Naive thymus-derived CD4-positive, alpha-beta T cell (primary cell): ENCODE measurements at regions of chr2 and their contacts with region 1.

Region 1: DNA sequence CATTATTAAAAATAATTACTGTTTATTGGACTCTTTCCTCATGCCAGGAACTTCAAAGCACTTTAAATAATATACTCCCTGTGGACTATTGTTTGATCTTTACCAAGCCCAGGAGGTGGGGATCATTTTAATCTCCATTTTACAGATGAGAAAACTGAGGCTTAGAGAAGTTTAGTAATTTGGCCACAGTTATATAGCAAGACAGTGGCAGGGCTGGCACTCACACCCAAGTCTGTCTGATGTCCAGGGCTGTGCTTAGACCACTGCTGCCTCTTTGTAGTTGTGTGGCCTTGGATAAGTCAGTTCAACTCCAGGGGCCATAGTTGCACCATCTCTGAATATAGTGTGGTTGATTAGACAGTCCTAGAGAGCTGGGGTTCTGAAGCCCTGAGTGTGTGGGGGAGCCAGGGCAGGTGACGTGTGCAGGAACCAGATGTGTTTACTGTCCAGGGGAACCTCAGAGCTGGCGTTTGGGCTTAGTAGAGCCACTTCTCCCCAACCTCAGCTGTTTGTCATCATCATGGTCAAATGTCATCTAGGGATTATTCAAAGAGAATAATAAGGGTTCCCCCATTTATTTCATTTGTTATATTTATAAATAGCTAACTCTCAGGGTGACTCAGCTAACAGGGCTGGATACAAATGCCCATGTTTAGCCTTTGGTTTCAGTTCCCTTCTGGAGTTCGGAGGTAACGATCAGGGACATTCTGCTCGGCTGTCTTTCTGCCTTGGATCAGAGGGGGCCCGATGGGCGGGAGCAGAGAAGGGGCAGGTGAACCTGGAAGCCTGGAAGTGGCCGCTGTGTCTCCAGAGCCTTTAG is 68.0 kb downstream of the BOLA3 start:
- DNase-seq: no peak
- ATAC-seq: peak; percentile 78
- H3K4me3 ChIP-seq: no peak overlapping the region
- H3K4me3 Mint-ChIP-seq: no peak overlapping the region
- H3K27ac ChIP-seq: no peak overlapping the region
- H3K27ac Mint-ChIP-seq: peak overlapping the region in 1 of 9 donors; percentile 38
- H3K4me1 ChIP-seq: no peaks in the 10 kb centered on the region
- H3K4me1 Mint-ChIP-seq: peaks cover 0 to 17% (median 4%) of the 10 kb centered on the region in 7 donors
- H3K27me3 ChIP-seq: no peaks in the 10 kb centered on the region
- H3K27me3 Mint-ChIP-seq: no peaks in the 10 kb centered on the region

Region 2: DNA sequence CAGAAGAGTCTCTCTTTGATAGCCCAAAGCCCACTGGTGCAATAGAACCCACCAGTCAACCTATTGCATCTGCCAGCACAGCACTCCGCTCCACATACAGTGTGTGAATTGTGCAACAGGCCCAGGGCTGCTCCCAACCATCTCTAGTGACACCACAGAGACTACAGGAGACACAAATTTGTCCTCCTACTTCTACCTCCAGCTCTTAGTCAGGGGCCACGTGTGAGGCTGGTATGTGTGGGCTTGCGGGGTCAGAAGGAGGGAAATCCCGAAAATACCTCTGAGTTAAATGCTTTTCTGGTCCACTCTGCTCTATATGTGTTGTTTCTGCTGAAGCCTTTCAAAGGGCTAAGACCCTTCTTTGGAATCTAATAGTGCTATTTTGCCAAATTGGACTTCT is 135.0 kb before region 1 on chr2:
- CTCF ChIA-PET with region 1: no interaction called
- POLR2A ChIA-PET with region 1: no interaction called
- intact Hi-C with region 1: loop called in 1 of 2 experiments (anchors 5 kb)
- DNase-seq: no peak
- ATAC-seq: no peak
- H3K4me3 ChIP-seq: no peak overlapping the region
- H3K4me3 Mint-ChIP-seq: peak overlapping the region in 2 of 10 donors; percentile 4 to 46
- H3K27ac ChIP-seq: peak overlapping the region; percentile 34
- H3K27ac Mint-ChIP-seq: peak overlapping the region in 8 of 9 donors; percentile 20 to 96 (median 62)
- H3K4me1 ChIP-seq: peaks cover 0 to 59% of the 10 kb centered on the region in 2 donors
- H3K4me1 Mint-ChIP-seq: peaks cover 47 to 97% (median 84%) of the 10 kb centered on the region in 7 donors
- H3K27me3 ChIP-seq: no peaks in the 10 kb centered on the region
- H3K27me3 Mint-ChIP-seq: no peaks in the 10 kb centered on the region

Region 3: GRCh38 chr2:75076088-75076487 is 996.4 kb after region 1 on chr2:
- CTCF ChIA-PET with region 1: no interaction called
- POLR2A ChIA-PET with region 1: no interaction called
- intact Hi-C with region 1: no loop called
- DNase-seq: no peak
- ATAC-seq: no peak
- H3K4me3 ChIP-seq: no peak overlapping the region
- H3K4me3 Mint-ChIP-seq: no peak overlapping the region
- H3K27ac ChIP-seq: no peak overlapping the region
- H3K27ac Mint-ChIP-seq: no peak overlapping the region
- H3K4me1 ChIP-seq: no peaks in the 10 kb centered on the region
- H3K4me1 Mint-ChIP-seq: no peaks in the 10 kb centered on the region
- H3K27me3 ChIP-seq: no peaks in the 10 kb centered on the region
- H3K27me3 Mint-ChIP-seq: no peaks in the 10 kb centered on the region